Activated CD4-positive, alpha-beta memory T cell treated with anti-CD3 and anti-CD28 coated beads for 36 hours (primary cell): ENCODE measurements at regions of chr3 and their contacts with region 1.

Region 1: DNA sequence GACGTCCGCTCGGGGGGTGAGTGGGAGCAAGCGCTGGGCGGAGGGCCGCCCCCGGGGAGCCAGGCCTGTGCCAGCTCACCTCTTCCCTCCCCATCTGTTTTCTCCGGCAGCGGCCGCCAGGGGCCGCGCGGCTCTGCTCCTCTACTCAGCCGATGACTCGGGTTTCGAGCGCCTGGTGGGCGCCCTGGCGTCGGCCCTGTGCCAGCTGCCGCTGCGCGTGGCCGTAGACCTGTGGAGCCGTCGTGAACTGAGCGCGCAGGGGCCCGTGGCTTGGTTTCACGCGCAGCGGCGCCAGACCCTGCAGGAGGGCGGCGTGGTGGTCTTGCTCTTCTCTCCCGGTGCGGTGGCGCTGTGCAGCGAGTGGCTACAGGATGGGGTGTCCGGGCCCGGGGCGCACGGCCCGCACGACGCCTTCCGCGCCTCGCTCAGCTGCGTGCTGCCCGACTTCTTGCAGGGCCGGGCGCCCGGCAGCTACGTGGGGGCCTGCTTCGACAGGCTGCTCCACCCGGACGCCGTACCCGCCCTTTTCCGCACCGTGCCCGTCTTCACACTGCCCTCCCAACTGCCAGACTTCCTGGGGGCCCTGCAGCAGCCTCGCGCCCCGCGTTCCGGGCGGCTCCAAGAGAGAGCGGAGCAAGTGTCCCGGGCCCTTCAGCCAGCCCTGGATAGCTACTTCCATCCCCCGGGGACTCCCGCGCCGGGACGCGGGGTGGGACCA is 632 bp upstream of the CRELD1 start:
- DNase-seq: peak; percentile 94
- H3K4me3 Mint-ChIP-seq: peak overlapping the region; percentile 86
- H3K27ac Mint-ChIP-seq: peak overlapping the region; percentile 89
- H3K4me1 Mint-ChIP-seq: peaks cover 28% of the 10 kb centered on the region
- H3K27me3 Mint-ChIP-seq: no peaks in the 10 kb centered on the region

Region 2: GRCh38 chr3:8103954-8104353 is 1829.0 kb before region 1 on chr3:
- CTCF ChIA-PET with region 1: no interaction called
- POLR2A ChIA-PET with region 1: no interaction called
- intact Hi-C with region 1: no loop called
- DNase-seq: no peak
- H3K4me3 Mint-ChIP-seq: no peak overlapping the region
- H3K27ac Mint-ChIP-seq: no peak overlapping the region
- H3K4me1 Mint-ChIP-seq: no peaks in the 10 kb centered on the region
- H3K27me3 Mint-ChIP-seq: no peaks in the 10 kb centered on the region

Region 3: DNA sequence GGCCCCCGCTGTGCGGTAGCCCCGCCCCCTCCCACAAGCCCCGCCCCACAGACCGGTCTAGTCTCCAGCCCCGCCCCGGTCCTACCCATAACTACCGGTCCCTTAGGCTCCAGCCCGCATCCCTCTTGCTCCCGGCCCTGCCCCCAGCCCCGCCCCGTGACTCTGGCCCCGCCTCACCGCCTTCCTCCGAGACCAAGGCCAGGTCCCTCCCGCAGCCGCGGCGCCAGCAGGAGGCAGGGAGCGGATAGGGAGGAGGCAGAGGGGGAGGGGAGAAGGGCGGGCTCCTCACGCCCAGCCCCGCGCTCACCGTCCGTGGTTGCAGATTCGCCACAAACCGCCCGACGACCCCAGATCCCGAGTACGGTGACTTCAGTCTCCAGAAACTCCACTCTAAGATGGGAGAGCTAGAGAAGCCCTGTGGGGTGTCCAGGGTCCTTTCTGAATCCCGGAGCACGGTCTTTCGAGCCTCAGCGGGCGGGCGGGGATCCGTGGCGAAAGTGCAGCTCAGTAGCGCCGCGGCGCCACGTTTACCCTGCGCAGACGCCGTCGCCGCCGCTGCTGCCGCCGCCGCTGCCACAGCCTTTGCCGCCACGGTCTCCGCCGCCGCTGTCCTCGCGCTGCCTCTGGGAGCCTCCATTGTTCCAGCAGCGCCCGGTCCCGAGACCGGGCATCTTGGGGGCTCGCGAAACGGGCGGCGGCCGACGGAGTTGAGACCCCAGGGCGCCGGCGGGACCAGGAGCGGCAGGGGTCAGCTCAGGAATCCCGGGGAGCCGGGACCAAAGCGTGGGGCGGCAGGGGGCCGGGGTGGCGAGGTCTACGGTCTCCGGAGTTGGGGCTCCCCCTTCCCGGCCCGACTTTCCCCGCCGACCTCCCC is 201.6 kb before region 1 on chr3 and contains the start of gene BRPF1:
- CTCF ChIA-PET with region 1: interaction called, 4 read pairs
- POLR2A ChIA-PET with region 1: interaction called, 3 read pairs
- intact Hi-C with region 1: loop called (anchors 5 kb)
- DNase-seq: peak; percentile 100
- H3K4me3 Mint-ChIP-seq: peak within 1 kb of the TSS; percentile 88
- H3K27ac Mint-ChIP-seq: peak within 1 kb of the TSS; percentile 96
- H3K4me1 Mint-ChIP-seq: peaks cover 72% of the 10 kb centered on the region
- H3K27me3 Mint-ChIP-seq: no peaks in the 10 kb centered on the region
- total RNA-seq, gene BRPF1: 25.0 to 27.3 TPM

Region 4: GRCh38 chr3:9890249-9891071 is 42.5 kb before region 1 on chr3 and contains the start of gene JAGN1:
- CTCF ChIA-PET with region 1: interaction called, 15 read pairs
- POLR2A ChIA-PET with region 1: interaction called, 24 read pairs
- intact Hi-C with region 1: loop called (anchors 1 kb)
- DNase-seq: peak; percentile 96
- H3K4me3 Mint-ChIP-seq: peak within 1 kb of the TSS; percentile 99
- H3K27ac Mint-ChIP-seq: peak within 1 kb of the TSS; percentile 99
- H3K4me1 Mint-ChIP-seq: peaks cover 31% of the 10 kb centered on the region
- H3K27me3 Mint-ChIP-seq: no peaks in the 10 kb centered on the region
- total RNA-seq, gene JAGN1: 25.0 to 27.8 TPM

Region 5: GRCh38 chr3:9951962-9952805 is 19.2 kb after region 1 on chr3 and contains the start of gene PRRT3:
- CTCF ChIA-PET with region 1: interaction called, 73 read pairs
- POLR2A ChIA-PET with region 1: interaction called, 33 read pairs
- intact Hi-C with region 1: loop called (anchors 1 kb)
- DNase-seq: peak; percentile 79
- H3K4me3 Mint-ChIP-seq: peak within 1 kb of the TSS; percentile 86
- H3K27ac Mint-ChIP-seq: peak within 1 kb of the TSS; percentile 73
- H3K4me1 Mint-ChIP-seq: peaks cover 14% of the 10 kb centered on the region
- H3K27me3 Mint-ChIP-seq: no peaks in the 10 kb centered on the region
- total RNA-seq, gene PRRT3: 7.8 to 8.2 TPM

Region 6: DNA sequence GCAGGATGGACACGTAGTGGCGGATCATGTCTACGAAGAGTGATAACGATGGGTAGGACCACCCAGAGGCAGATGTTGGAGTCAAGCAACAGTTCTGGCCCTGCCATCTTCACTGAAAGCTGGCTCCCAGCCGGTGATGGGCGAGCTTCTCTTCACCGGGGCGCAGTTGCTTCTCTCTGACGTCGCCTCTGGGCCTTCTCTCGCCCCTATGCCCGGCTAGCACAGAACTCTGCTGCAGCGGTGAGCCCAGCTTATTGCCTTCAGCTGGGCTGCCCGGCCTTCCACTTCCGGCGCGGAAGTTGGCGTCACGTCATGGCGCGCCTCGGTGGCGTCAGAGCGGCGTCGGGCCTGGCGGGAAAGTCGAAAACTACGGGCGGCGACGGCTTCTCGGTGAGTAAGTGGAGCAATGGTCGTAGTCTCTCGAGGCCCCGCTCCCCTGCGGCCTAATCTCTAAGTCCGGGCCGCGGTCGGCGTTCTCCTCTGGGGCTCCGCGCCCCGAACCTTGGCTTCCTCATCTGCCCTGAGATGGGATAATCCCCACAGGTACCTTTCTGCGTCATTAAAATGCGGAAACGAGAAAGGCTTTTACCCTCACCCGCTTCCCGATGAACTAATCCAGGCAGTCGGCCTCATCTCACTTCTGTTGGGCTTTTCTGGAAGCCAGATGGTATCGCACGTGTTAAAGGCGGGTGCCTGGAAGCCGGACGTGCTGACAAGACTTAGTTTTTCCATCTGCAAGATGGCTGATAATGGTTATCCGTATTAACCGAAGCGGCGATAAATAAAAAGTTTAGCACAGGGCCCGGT is 93.3 kb after region 1 on chr3 and contains the start of gene FANCD2:
- CTCF ChIA-PET with region 1: interaction called, 4 read pairs
- POLR2A ChIA-PET with region 1: interaction called, 3 read pairs
- intact Hi-C with region 1: loop called (anchors 1 kb)
- DNase-seq: peak; percentile 96
- H3K4me3 Mint-ChIP-seq: peak within 1 kb of the TSS; percentile 97
- H3K27ac Mint-ChIP-seq: peak within 1 kb of the TSS; percentile 98
- H3K4me1 Mint-ChIP-seq: peaks cover 24% of the 10 kb centered on the region
- H3K27me3 Mint-ChIP-seq: no peaks in the 10 kb centered on the region
- total RNA-seq, gene FANCD2: 83.9 to 89.4 TPM

Region 7: GRCh38 chr3:10248184-10249080 is 315.4 kb after region 1 on chr3 and contains the start of gene TATDN2:
- CTCF ChIA-PET with region 1: no interaction called
- POLR2A ChIA-PET with region 1: no interaction called
- intact Hi-C with region 1: loop called (anchors 5 kb)
- DNase-seq: peak; percentile 97
- H3K4me3 Mint-ChIP-seq: peak within 1 kb of the TSS; percentile 97
- H3K27ac Mint-ChIP-seq: peak within 1 kb of the TSS; percentile 98
- H3K4me1 Mint-ChIP-seq: peaks cover 61% of the 10 kb centered on the region
- H3K27me3 Mint-ChIP-seq: no peaks in the 10 kb centered on the region
- total RNA-seq, gene TATDN2: 36.9 to 39.4 TPM